Activated CD4-positive, alpha-beta memory T cell treated with anti-CD3 and anti-CD28 coated beads, Interleukin-2, amount 10 ng/mL, durations not matched to agents 7 days and 5 days (primary cell): ENCODE measurements at regions of chr3 and their contacts with region 1.

Region 1: GRCh38 chr3:49786241-49786958 is at the start of gene IP6K1:
- DNase-seq: peak; percentile 100
- H3K4me3 Mint-ChIP-seq: peak within 1 kb of the TSS; percentile 85
- H3K27ac Mint-ChIP-seq: peak within 1 kb of the TSS; percentile 92
- H3K4me1 Mint-ChIP-seq: peaks cover 34% of the 10 kb centered on the region
- H3K27me3 Mint-ChIP-seq: peaks cover 3% of the 10 kb centered on the region
- total RNA-seq, gene IP6K1: 38.8 to 39.2 TPM

Region 2: DNA sequence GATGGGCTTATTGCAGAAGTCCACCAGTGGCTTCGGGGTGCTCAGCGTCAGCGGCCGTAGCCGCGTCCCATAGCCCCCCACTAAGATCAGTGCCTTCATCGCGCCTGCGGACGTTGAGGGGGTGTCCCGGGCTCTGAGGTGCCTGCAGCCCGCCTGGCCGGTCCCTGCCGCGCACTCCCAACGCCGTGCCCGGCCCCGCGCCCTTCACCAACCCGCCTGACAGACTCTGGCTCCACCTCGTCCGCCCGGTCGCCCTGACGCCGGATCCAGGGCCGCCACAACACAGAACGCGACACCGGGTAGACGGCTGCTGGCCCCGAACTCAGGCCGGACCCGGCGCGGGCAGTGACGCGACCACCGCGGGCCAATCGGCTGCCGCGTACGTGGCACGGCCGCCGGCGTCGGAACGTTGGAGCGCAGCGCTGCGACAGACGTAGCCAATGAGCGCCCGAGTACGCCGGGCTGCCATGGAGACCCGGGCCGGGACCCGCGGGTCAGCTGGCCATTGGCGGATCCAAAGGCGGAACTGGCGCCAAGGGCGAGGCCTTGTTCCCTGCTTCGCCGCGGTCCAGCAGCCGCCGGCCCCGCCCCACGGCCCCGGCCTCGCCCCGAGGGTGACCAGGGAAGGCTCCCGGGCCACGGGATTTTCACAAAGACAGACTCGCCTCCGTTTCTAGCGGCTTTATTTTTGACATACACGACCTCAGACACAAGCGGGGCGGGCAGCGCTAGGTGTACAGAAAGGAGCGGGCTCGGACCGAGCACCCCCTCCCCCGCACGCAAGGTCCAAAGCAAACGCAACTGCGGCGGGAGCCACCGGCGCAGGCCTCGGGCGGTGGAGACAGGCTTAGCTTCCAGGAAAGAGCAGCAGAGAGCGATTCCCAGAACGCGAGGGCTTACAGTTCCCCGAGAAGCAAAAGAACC is 62.5 kb before region 1 on chr3 and contains the start of gene GMPPB:
- CTCF ChIA-PET with region 1: no interaction called
- POLR2A ChIA-PET with region 1: interaction called, 11 read pairs
- DNase-seq: peak; percentile 96
- H3K4me3 Mint-ChIP-seq: peak within 1 kb of the TSS; percentile 91
- H3K27ac Mint-ChIP-seq: peak within 1 kb of the TSS; percentile 97
- H3K4me1 Mint-ChIP-seq: peaks cover 44% of the 10 kb centered on the region
- H3K27me3 Mint-ChIP-seq: no peaks in the 10 kb centered on the region
- total RNA-seq, gene GMPPB: 48.2 to 49.0 TPM

Region 3: GRCh38 chr3:49813497-49814174 is 27.2 kb after region 1 on chr3 and contains the start of gene UBA7:
- CTCF ChIA-PET with region 1: no interaction called
- POLR2A ChIA-PET with region 1: interaction called, 12 read pairs
- DNase-seq: peak; percentile 51
- H3K4me3 Mint-ChIP-seq: peak within 1 kb of the TSS; percentile 96
- H3K27ac Mint-ChIP-seq: peak within 1 kb of the TSS; percentile 93
- H3K4me1 Mint-ChIP-seq: peaks cover 31% of the 10 kb centered on the region
- H3K27me3 Mint-ChIP-seq: no peaks in the 10 kb centered on the region
- total RNA-seq, gene UBA7: 179 to 182 TPM